ENCODE measurements at regions of chr12 and their contacts with region 1.

Region 1: GRCh38 chr12:48105862-48106680 is at the start of gene SENP1:
- DNase-seq: peak; percentile 94
- H3K4me3 Mint-ChIP-seq: peak within 1 kb of the TSS; percentile 87
- H3K27ac Mint-ChIP-seq: peak within 1 kb of the TSS; percentile 96
- H3K4me1 Mint-ChIP-seq: peaks cover 47% of the 10 kb centered on the region
- H3K27me3 Mint-ChIP-seq: no peaks in the 10 kb centered on the region
- total RNA-seq, gene SENP1: 41.4 to 47.8 TPM

Region 2: GRCh38 chr12:47981496-47982260 is 124.4 kb before region 1 on chr12:
- CTCF ChIA-PET with region 1: no interaction called
- intact Hi-C with region 1: no loop called
- DNase-seq: no peak
- H3K4me3 Mint-ChIP-seq: no peak overlapping the region
- H3K27ac Mint-ChIP-seq: no peak overlapping the region
- H3K4me1 Mint-ChIP-seq: no peaks in the 10 kb centered on the region
- H3K27me3 Mint-ChIP-seq: no peaks in the 10 kb centered on the region

Region 3: GRCh38 chr12:48119078-48119833 is 13.2 kb after region 1 on chr12 and contains the start of gene PFKM:
- CTCF ChIA-PET with region 1: interaction called, 4 read pairs
- intact Hi-C with region 1: loop called (anchors 1 kb)
- DNase-seq: peak; percentile 86
- H3K4me3 Mint-ChIP-seq: peak within 1 kb of the TSS; percentile 93
- H3K27ac Mint-ChIP-seq: peak within 1 kb of the TSS; percentile 51
- H3K4me1 Mint-ChIP-seq: peaks cover 19% of the 10 kb centered on the region
- H3K27me3 Mint-ChIP-seq: no peaks in the 10 kb centered on the region
- total RNA-seq, gene PFKM: 68.2 to 71.9 TPM

Region 4: GRCh38 chr12:48350249-48351021 is 244.4 kb after region 1 on chr12 and contains the start of gene ZNF641:
- CTCF ChIA-PET with region 1: no interaction called
- intact Hi-C with region 1: loop called (anchors 5 kb)
- DNase-seq: peak; percentile 79
- H3K4me3 Mint-ChIP-seq: peak within 1 kb of the TSS; percentile 91
- H3K27ac Mint-ChIP-seq: peak within 1 kb of the TSS; percentile 81
- H3K4me1 Mint-ChIP-seq: peaks cover 24% of the 10 kb centered on the region
- H3K27me3 Mint-ChIP-seq: no peaks in the 10 kb centered on the region
- total RNA-seq, gene ZNF641: 3.5 to 6.0 TPM

Region 5: DNA sequence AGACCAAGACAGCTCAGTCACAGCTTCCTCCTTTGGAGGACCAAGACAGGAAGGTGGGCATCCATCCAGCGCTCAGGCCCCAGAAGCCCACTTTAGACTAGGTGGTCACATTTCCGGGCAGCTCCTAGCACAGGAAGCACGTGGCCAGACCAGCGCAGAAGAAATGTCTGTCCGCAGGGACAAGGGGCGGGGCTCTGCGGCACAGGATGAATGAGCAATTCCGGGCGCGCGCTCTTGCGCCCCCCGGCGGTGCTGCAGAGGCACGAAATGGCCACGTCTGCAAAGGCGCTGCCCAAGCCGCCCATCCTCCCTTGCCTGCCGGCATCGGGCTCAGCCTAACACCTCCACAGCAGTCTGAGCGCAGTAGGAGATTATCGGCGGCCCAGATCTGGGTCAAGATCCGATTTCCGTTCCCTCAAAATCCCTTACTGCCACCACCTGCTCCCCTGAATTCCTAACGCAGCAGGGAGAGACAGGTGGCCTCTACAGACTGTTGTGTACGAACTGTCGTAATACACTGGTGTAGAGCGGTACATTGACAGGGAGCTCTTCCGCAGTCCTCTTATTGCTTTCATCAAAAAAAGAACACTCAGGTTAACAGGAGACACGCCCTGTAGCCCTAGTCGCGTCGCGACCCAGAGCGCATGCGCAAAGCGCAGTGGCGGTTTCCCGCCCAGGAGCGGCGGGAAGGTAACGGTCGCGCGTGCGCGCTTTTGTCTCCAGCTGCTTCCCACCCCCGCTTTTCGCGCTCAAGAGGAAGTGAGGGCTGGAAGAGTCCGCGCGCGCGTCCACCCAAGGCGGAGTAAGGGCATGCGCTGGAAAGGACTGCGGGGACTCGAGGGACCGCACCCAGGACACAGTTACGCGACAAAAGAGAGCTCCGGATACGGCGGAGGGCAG is 1024.3 kb after region 1 on chr12:
- CTCF ChIA-PET with region 1: no interaction called
- intact Hi-C with region 1: loop called (anchors 5 kb)
- DNase-seq: peak; percentile 96
- H3K4me3 Mint-ChIP-seq: peak overlapping the region; percentile 97
- H3K27ac Mint-ChIP-seq: peak overlapping the region; percentile 100
- H3K4me1 Mint-ChIP-seq: peaks cover 43% of the 10 kb centered on the region
- H3K27me3 Mint-ChIP-seq: no peaks in the 10 kb centered on the region